Thyroid gland (tissue), 4 donors: ENCODE measurements at regions of chr12 and their contacts with region 1.

Region 1: GRCh38 chr12:109597795-109598427 is 24.3 kb downstream of the MVK start:
- DNase-seq: peak; percentile 89 to 90
- H3K4me3 ChIP-seq: no peak overlapping the region
- H3K27ac ChIP-seq: no peak overlapping the region
- H3K4me1 ChIP-seq: peaks cover 3 to 9% of the 10 kb centered on the region in 2 donors
- H3K27me3 ChIP-seq: no peaks in the 10 kb centered on the region
- CTCF ChIP-seq: peak; percentile 71 to 98 (median 92)
- POLR2A ChIP-seq: no peak

Region 2: GRCh38 chr12:109428037-109428629 is 169.8 kb before region 1 on chr12:
- intact Hi-C with region 1: loop called (anchors 10 kb)
- DNase-seq: peak; percentile 82 to 86
- H3K4me3 ChIP-seq: no peak overlapping the region
- H3K27ac ChIP-seq: no peak overlapping the region
- H3K4me1 ChIP-seq: peaks cover 3 to 8% of the 10 kb centered on the region in 2 donors
- H3K27me3 ChIP-seq: no peaks in the 10 kb centered on the region
- CTCF ChIP-seq: peak; percentile 87 to 98 (median 96)
- POLR2A ChIP-seq: no peak

Region 3: GRCh38 chr12:109719236-109720022 is 121.5 kb after region 1 on chr12:
- intact Hi-C with region 1: loop called (anchors 5 kb)
- DNase-seq: no peak
- H3K4me3 ChIP-seq: no peak overlapping the region
- H3K27ac ChIP-seq: no peak overlapping the region
- H3K4me1 ChIP-seq: peaks cover 0 to 6% of the 10 kb centered on the region in 2 donors
- H3K27me3 ChIP-seq: no peaks in the 10 kb centered on the region
- CTCF ChIP-seq: no peak
- POLR2A ChIP-seq: no peak

Region 4: DNA sequence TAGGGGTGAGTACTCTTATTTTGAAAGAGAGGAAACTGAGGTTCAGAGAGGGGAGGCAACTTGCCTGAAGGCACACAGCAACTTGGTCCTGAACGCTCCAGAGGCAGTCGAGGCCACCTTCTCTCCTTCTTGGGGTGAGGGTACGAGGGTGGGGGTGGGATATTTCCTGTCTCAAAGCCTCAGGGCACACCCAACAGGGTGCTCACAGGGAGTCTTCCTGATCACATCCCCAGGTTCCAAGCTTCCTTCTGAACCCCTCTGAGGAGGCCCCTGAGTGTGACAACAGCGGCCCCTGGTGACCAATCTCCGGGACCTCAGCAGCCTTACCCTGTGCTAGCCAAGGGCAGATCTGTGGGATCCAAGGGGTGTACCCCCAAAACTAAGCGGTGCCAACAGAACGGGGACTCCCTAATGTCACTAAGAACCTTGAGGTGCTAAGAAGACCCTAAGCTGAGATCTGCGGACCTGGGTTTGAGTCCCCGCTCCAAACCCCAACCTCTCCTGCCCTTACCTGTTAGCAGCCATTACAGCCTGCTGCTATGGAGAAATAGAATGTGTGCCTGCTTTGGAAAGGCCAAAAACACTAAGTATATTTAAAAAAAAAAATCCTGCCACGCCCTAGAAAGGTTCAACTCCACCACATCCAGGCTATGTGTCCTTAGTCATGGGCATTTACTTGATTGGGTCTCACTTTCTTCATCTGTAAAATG is 177.4 kb after region 1 on chr12:
- intact Hi-C with region 1: loop called (anchors 5 kb)
- DNase-seq: peak; percentile 65 to 76
- H3K4me3 ChIP-seq: no peak overlapping the region
- H3K27ac ChIP-seq: no peak overlapping the region
- H3K4me1 ChIP-seq: peaks cover 0 to 8% of the 10 kb centered on the region in 2 donors
- H3K27me3 ChIP-seq: no peaks in the 10 kb centered on the region
- CTCF ChIP-seq: peak; percentile 70 to 85 (median 80)
- POLR2A ChIP-seq: no peak